ENCODE measurements at regions of chr15 and their contacts with region 1.

Region 1: GRCh38 chr15:76945494-76946093 is 14.0 kb downstream of the RCN2 start:
- DNase-seq: no peak
- ATAC-seq: no peak
- H3K4me3 Mint-ChIP-seq: no peak overlapping the region
- H3K27ac Mint-ChIP-seq: no peak overlapping the region
- H3K4me1 Mint-ChIP-seq: peaks cover 1% of the 10 kb centered on the region
- H3K27me3 Mint-ChIP-seq: no peaks in the 10 kb centered on the region

Region 2: DNA sequence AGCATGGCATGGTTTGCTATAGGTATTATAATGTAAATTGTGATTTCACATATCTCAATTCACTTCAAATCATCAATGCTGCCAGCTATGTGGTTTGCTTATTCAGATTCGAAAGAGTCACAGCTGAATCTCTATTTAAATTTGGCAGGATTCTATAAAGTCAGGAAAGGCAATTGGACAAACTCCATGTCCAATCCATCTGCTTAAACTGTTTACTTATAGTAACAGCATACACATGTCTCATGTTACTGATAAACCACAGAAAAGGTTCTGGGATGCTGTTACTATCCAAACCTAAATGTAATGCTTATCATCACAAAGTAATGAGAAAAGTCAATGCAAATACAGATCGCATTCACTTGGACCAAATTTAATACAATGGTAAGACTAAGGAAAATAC is 379.3 kb before region 1 on chr15:
- CTCF ChIA-PET with region 1: no interaction called
- POLR2A ChIA-PET with region 1: no interaction called
- DNase-seq: no peak
- ATAC-seq: no peak
- H3K4me3 Mint-ChIP-seq: no peak overlapping the region
- H3K27ac Mint-ChIP-seq: no peak overlapping the region
- H3K4me1 Mint-ChIP-seq: no peaks in the 10 kb centered on the region
- H3K27me3 Mint-ChIP-seq: no peaks in the 10 kb centered on the region

Region 3: DNA sequence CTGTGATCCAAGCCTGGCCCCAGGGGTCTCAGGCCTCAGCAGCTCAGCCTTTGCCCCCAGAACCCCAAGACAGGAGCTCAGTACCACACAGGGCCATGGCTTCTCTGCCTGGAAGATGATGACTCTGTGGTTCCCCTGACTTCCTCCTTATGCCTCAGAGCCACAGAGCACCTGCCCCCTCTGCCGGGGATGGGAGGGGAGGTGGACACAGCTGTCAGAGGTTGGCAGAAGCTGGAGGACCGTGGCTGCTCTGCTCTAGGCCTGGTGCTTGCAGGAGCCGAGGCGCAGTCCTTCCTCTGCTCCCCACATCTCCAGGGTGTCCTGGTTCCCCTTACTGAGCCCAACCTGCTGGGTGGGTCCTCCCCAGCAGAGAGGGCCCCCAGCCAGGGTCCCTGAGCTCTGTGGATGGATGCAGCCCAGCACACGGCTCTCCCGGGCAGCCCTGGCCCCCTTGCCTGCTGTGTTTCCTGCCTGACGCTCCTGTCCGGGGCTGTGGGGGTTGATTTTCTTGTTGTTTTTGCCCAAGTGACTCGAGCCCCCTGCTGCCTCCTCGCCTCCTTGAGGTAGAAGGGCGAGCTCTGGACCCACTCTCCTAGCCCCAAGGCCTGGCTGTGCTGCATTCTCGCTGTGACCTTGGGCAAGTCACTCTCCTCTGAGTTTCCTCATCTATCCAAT is 85.9 kb after region 1 on chr15:
- CTCF ChIA-PET with region 1: interaction called, 11 read pairs
- POLR2A ChIA-PET with region 1: no interaction called
- DNase-seq: peak; percentile 76
- ATAC-seq: peak; percentile 86
- H3K4me3 Mint-ChIP-seq: no peak overlapping the region
- H3K27ac Mint-ChIP-seq: peak overlapping the region; percentile 82
- H3K4me1 Mint-ChIP-seq: peaks cover 39% of the 10 kb centered on the region
- H3K27me3 Mint-ChIP-seq: no peaks in the 10 kb centered on the region

Measured in activated CD8-positive, alpha-beta T cell treated with anti-CD3 and anti-CD28 coated beads, Interleukin-2, amount 10 ng/mL, durations not matched to agents 7 days and 5 days (primary cell).